Heart right ventricle (tissue), 16 donors: ENCODE measurements at regions of chr17 and their contacts with region 1.

Region 1: GRCh38 chr17:72104164-72104862 is 16.5 kb upstream of the SOX9 start:
- DNase-seq: peak in 1 of 2 donors; percentile 27
- ATAC-seq: peak in 3 of 8 donors; percentile 16 to 65 (median 26)
- H3K4me3 ChIP-seq: no peak overlapping the region
- H3K27ac ChIP-seq: peak overlapping the region in 2 of 10 donors; percentile 4 to 36
- H3K4me1 ChIP-seq: peaks cover 0 to 8% (median 0%) of the 10 kb centered on the region in 9 donors
- H3K27me3 ChIP-seq: peaks cover 0 to under 1% (median 0%) of the 10 kb centered on the region in 7 donors
- CTCF ChIP-seq: no peak

Region 2: GRCh38 chr17:71472809-71473789 is 631.2 kb before region 1 on chr17:
- intact Hi-C with region 1: loop called in 2 of 10 experiments (anchors 10 kb)
- DNase-seq: peak in 1 of 2 donors; percentile 6
- ATAC-seq: peak in 3 of 8 donors; percentile 34 to 78 (median 35)
- H3K4me3 ChIP-seq: no peak overlapping the region
- H3K27ac ChIP-seq: no peak overlapping the region
- H3K4me1 ChIP-seq: no peaks in the 10 kb centered on the region
- H3K27me3 ChIP-seq: peaks cover 0 to 13% (median 0%) of the 10 kb centered on the region in 7 donors
- CTCF ChIP-seq: peak; percentile 30 to 65 (median 56)

Region 3: GRCh38 chr17:71976011-71976649 is 128.2 kb before region 1 on chr17:
- intact Hi-C with region 1: loop called in 1 of 10 experiments (anchors 10 kb)
- DNase-seq: peak; percentile 76 to 78
- ATAC-seq: peak; percentile 93 to 98 (median 96)
- H3K4me3 ChIP-seq: peak overlapping the region in 2 of 10 donors; percentile 42 to 48
- H3K27ac ChIP-seq: peak overlapping the region in 4 of 10 donors; percentile 19 to 79 (median 55)
- H3K4me1 ChIP-seq: peaks cover 0 to 19% (median 4%) of the 10 kb centered on the region in 9 donors
- H3K27me3 ChIP-seq: no peaks in the 10 kb centered on the region
- CTCF ChIP-seq: no peak

Region 4: DNA sequence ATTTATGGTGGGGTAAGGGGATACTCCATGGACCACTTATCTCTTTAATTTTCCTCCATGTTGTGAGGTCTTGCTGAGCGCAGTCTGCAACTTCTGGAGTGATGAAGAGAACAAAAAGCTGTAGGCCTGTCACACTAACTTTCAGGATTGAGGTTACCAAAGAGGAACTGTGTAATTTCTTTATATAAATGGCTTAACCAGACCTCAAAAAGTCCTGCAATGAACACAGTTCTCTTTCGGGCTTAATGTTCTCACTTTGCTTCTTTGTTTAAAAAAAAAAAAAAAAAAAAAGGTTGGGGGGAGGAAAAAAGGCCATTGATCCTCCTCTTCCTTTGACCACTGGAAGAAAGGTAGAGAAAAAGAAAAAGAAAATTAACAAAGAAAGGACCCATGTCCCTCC is 70.3 kb before region 1 on chr17:
- intact Hi-C with region 1: loop called in 1 of 10 experiments (anchors 2 kb)
- DNase-seq: no peak
- ATAC-seq: no peak
- H3K4me3 ChIP-seq: no peak overlapping the region
- H3K27ac ChIP-seq: no peak overlapping the region
- H3K4me1 ChIP-seq: peaks cover 0 to 12% (median 0%) of the 10 kb centered on the region in 9 donors
- H3K27me3 ChIP-seq: peaks cover 0 to 5% (median 0%) of the 10 kb centered on the region in 7 donors
- CTCF ChIP-seq: no peak